ENCODE measurements at regions of chr1 and their contacts with region 1.

Region 1: GRCh38 chr1:30911046-30911954 is 2.7 kb upstream of the SDC3 start:
- DNase-seq: peak; percentile 74
- ATAC-seq: peak; percentile 74
- H3K4me3 ChIP-seq: no peak overlapping the region
- H3K27ac ChIP-seq: peak overlapping the region; percentile 83; the same call in 1 of the 2 replicates
- H3K4me1 ChIP-seq: peaks cover 28 to 39% of the 10 kb centered on the region in 2 experiments
- H3K27me3 ChIP-seq: no peaks in the 10 kb centered on the region
- CTCF ChIP-seq: peak; percentile 85 to 98 (median 87)
- POLR2A ChIP-seq: no peak
- RAD21 ChIP-seq: peak; percentile 100

Region 2: DNA sequence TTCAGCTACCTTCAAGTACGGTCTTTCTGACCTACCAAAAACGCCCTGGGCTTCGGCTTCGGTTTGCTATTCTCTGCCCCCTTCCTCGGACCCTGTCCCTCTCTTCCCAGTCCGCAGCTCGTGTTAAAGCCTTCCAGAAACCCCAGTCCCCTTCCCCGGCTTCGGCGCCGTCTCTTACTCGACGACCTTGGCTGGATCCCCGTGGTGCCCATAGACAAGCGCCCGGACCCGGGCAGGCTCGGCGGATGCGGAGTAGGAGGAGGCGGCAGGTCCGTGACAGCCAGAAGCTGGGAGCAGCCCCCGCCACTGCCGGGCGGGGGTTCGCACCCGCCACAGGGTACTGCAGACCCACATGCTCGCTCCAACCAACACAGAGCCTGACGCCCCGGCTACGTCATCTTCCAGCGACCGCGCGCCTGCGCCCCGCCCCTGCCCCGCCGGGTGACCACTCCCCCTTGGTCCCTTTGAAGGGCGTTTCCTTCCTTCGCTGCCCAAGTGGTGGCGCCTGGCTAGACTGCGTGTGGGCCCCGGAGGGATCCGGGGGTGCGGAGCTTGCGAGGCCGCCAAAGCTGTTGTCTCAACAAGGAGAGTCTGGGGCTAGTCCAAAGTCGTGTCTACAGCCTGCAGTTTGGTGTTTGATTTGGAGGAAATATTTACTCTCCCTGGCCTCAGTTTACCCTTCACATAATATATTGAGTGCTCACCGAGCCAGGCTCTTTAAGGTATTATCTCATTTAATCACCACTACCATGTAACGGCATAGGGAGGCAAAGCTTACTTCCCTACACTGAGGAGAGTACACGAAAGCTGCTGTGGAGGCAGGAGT is 1680.5 kb before region 1 on chr1 and contains the start of gene MECR:
- CTCF ChIA-PET with region 1: no interaction called
- POLR2A ChIA-PET with region 1: no interaction called
- RAD21 ChIA-PET with region 1: no interaction called
- intact Hi-C with region 1: loop called (anchors 10 kb)
- DNase-seq: peak; percentile 88
- ATAC-seq: peak; percentile 92
- H3K4me3 ChIP-seq: peak within 1 kb of the TSS; percentile 87 to 100
- H3K27ac ChIP-seq: peak within 1 kb of the TSS; percentile 61
- H3K4me1 ChIP-seq: peaks cover 7 to 22% of the 10 kb centered on the region in 2 experiments; a peak in 3 of 4 replicates
- H3K27me3 ChIP-seq: no peaks in the 10 kb centered on the region
- CTCF ChIP-seq: peak in 2 of 3 experiments; percentile 20; a peak in 1 of 6 replicates
- POLR2A ChIP-seq: peak; percentile 83
- RAD21 ChIP-seq: no peak
- total RNA-seq, gene MECR: 42.9 TPM

Region 3: DNA sequence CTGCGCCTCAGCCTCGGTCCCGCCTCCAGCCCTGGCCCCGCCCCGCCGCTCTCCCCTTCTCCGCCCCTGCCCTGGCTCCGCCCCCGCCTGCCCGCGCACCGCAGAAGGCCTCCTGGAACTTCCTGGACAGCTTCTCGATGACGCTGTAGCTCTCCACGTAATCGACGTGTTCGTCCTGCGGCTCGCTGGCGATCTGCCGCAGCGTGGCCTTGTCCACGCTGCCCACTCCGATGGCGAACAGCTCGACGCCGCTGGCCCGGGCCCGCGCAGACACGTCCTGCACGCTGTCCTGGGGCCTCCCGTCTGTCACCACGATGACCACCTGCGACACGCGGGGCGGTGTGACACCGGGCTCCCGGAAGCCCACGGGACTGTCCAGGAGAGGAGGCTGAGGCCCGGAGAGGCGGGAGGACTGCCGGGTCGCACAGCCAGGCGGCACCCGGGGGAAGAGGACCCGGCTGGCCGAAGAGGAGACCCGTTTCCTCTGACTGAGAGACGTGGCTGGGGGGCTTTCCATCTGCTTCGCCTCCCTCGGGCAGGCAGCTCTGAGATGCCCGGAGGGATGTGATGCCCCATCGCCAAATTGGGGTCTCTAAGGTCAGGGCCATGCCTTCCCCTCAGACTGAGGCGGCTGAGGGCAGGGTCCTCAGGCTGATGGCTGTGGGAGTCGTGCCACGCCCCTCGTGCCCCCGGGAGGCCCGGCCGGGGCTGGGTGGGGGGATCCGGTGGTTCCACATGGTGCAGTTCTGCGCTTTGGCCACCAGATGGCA is 192.5 kb before region 1 on chr1:
- CTCF ChIA-PET with region 1: interaction called, 56 read pairs
- POLR2A ChIA-PET with region 1: interaction called, 10 read pairs
- RAD21 ChIA-PET with region 1: interaction called in 1 of 2 experiments, 10 read pairs
- intact Hi-C with region 1: loop called (anchors 1 kb)
- DNase-seq: peak; percentile 91
- ATAC-seq: peak; percentile 81
- H3K4me3 ChIP-seq: peak overlapping the region; percentile 75 to 78
- H3K27ac ChIP-seq: peak overlapping the region; percentile 77
- H3K4me1 ChIP-seq: peaks cover 22 to 34% of the 10 kb centered on the region in 2 experiments
- H3K27me3 ChIP-seq: no peaks in the 10 kb centered on the region
- CTCF ChIP-seq: peak; percentile 83 to 94 (median 84)
- POLR2A ChIP-seq: peak; percentile 65
- RAD21 ChIP-seq: no peak; the same call in 1 of the 2 replicates

Region 4: GRCh38 chr1:30807324-30808066 is 103.8 kb before region 1 on chr1:
- CTCF ChIA-PET with region 1: interaction called, 242 read pairs
- POLR2A ChIA-PET with region 1: interaction called, 31 read pairs
- RAD21 ChIA-PET with region 1: interaction called, 39 to 69 read pairs
- intact Hi-C with region 1: no loop called
- DNase-seq: no peak
- ATAC-seq: no peak
- H3K4me3 ChIP-seq: no peak overlapping the region
- H3K27ac ChIP-seq: no peak overlapping the region
- H3K4me1 ChIP-seq: peaks cover 4 to 17% of the 10 kb centered on the region in 2 experiments; a peak in 2 of 4 replicates
- H3K27me3 ChIP-seq: peaks cover 7% of the 10 kb centered on the region; the same call in 1 of the 2 replicates
- CTCF ChIP-seq: no peak
- POLR2A ChIP-seq: no peak
- RAD21 ChIP-seq: no peak

Measured in HCT116 (cell line).